CD8-positive, alpha-beta T cell (primary cell): ENCODE measurements at regions of chr11 and their contacts with region 1.

Region 1: GRCh38 chr11:9738116-9738515 is 74.2 kb downstream of the SWAP70 start:
- DNase-seq: no peak
- ATAC-seq: no peak
- H3K4me3 ChIP-seq: no peak overlapping the region
- H3K4me3 Mint-ChIP-seq: no peak overlapping the region
- H3K27ac ChIP-seq: no peak overlapping the region
- H3K27ac Mint-ChIP-seq: no peak overlapping the region
- H3K4me1 ChIP-seq: no peaks in the 10 kb centered on the region
- H3K4me1 Mint-ChIP-seq: peaks cover 2% of the 10 kb centered on the region
- H3K27me3 ChIP-seq: no peaks in the 10 kb centered on the region
- H3K27me3 Mint-ChIP-seq: no peaks in the 10 kb centered on the region
- CTCF ChIP-seq: no peak

Region 2: GRCh38 chr11:9626496-9627394 is 111.4 kb before region 1 on chr11:
- CTCF ChIA-PET with region 1: no interaction called
- POLR2A ChIA-PET with region 1: no interaction called
- intact Hi-C with region 1: no loop called
- DNase-seq: no peak
- ATAC-seq: no peak
- H3K4me3 ChIP-seq: no peak overlapping the region
- H3K4me3 Mint-ChIP-seq: no peak overlapping the region
- H3K27ac ChIP-seq: no peak overlapping the region
- H3K27ac Mint-ChIP-seq: no peak overlapping the region
- H3K4me1 ChIP-seq: no peaks in the 10 kb centered on the region
- H3K4me1 Mint-ChIP-seq: no peaks in the 10 kb centered on the region
- H3K27me3 ChIP-seq: no peaks in the 10 kb centered on the region
- H3K27me3 Mint-ChIP-seq: peaks cover 2% of the 10 kb centered on the region
- CTCF ChIP-seq: no peak

Region 3: DNA sequence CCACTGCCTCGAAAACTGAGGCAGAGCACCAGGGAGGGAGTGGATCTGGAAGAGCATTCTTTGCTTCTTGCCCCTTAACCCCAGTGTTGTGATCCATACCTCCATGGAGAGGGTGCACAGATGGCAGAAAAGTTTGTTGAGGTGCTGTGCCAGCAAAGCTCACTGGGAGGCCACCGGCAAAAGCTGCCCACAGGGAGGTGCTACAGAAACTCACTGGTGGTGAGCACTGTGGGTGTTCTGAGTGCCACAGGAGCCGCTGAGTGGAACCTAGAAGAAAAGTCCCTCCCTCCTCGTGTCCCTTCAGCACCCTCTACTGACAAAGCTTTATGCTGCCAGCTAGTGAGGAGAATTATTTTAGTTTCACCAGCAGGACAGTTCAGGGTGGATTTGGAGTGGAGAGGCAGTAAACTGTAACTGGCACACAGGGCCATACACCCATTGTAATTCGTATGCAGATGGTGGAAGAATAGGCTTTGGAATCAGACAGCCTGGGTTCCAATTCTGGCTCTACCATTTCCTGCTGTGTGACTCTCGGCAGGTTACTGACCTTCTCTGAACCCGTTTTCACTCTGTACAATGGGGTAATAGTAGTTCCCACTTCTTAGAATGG is 10.3 kb after region 1 on chr11:
- CTCF ChIA-PET with region 1: interaction called, 11 read pairs
- POLR2A ChIA-PET with region 1: no interaction called
- intact Hi-C with region 1: no loop called
- DNase-seq: peak; percentile 15 to 82 (median 55)
- ATAC-seq: peak; percentile 98
- H3K4me3 ChIP-seq: no peak overlapping the region
- H3K4me3 Mint-ChIP-seq: no peak overlapping the region
- H3K27ac ChIP-seq: no peak overlapping the region
- H3K27ac Mint-ChIP-seq: no peak overlapping the region
- H3K4me1 ChIP-seq: no peaks in the 10 kb centered on the region
- H3K4me1 Mint-ChIP-seq: peaks cover 3% of the 10 kb centered on the region
- H3K27me3 ChIP-seq: no peaks in the 10 kb centered on the region
- H3K27me3 Mint-ChIP-seq: no peaks in the 10 kb centered on the region
- CTCF ChIP-seq: peak; percentile 55